Caco-2 (cell line): ENCODE measurements at regions of chr11 and their contacts with region 1.

Region 1: GRCh38 chr11:22674470-22675439 is 8.3 kb downstream of the GAS2 start:
- DNase-seq: peak; percentile 68 to 72
- H3K4me3 ChIP-seq: peak overlapping the region; percentile 11
- H3K4me3 Mint-ChIP-seq: peak overlapping the region; percentile 58
- H3K27ac Mint-ChIP-seq: peak overlapping the region; percentile 62
- H3K4me1 ChIP-seq: peaks cover 60% of the 10 kb centered on the region
- H3K4me1 Mint-ChIP-seq: peaks cover 39% of the 10 kb centered on the region
- H3K27me3 ChIP-seq: no peaks in the 10 kb centered on the region
- H3K27me3 Mint-ChIP-seq: no peaks in the 10 kb centered on the region
- CTCF ChIP-seq: no peak

Region 2: DNA sequence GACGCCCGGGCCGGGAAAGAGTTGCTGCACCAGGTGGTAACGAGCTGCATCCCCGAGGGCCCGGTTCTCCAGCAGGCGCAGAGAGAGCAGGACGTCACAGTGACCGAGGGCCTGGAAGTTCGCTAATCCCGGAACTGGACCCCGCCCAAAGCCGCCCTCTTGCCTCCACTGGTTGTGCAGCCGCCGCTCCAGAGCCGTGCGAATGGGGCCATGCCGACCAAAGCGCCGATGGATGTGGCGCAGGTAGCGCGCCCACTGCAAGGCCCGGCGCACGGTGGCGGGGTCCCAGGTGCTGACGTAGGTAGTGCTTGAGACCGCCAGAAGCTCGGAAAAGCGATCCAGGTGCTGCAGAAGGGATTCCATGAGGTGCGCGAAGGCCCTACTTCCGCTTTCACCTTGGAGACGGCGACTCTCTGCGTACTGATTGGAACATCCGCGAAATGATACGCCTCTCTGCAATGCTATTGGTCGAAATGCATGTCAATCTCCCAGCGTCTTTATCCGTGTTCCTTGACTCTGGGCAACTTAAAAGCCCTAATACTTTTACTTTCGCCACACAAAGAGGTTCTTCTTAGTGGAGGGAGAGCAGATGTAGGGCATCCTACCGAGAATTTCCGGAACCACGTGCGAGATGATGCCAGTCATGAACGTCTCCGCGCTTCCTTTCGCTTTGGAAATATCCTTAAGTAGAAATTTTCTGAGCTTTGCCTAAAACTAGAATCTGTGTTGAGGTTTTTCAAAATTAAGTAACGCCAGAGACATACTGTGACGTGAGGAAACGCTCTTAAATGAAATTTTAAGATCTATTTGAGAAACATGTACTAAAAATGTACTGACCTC is 49.1 kb before region 1 on chr11 and contains the start of gene FANCF:
- CTCF ChIA-PET with region 1: interaction called, 3 read pairs
- POLR2A ChIA-PET with region 1: no interaction called
- intact Hi-C with region 1: loop called (anchors 2 kb)
- DNase-seq: peak; percentile 95 to 98
- H3K4me3 ChIP-seq: peak within 1 kb of the TSS; percentile 88
- H3K4me3 Mint-ChIP-seq: peak within 1 kb of the TSS; percentile 97
- H3K27ac Mint-ChIP-seq: peak within 1 kb of the TSS; percentile 99
- H3K4me1 ChIP-seq: peaks cover 7% of the 10 kb centered on the region; the same call in 1 of the 2 replicates
- H3K4me1 Mint-ChIP-seq: no peaks in the 10 kb centered on the region
- H3K27me3 ChIP-seq: no peaks in the 10 kb centered on the region
- H3K27me3 Mint-ChIP-seq: no peaks in the 10 kb centered on the region
- CTCF ChIP-seq: no peak
- total RNA-seq, gene FANCF: 13.8 and 15.4 TPM in 2 replicates

Region 3: GRCh38 chr11:22688914-22689313 is 14.2 kb after region 1 on chr11:
- CTCF ChIA-PET with region 1: no interaction called
- POLR2A ChIA-PET with region 1: no interaction called
- intact Hi-C with region 1: loop called (anchors 2 kb)
- DNase-seq: peak in 1 of 2 experiments; percentile 30
- H3K4me3 ChIP-seq: no peak overlapping the region
- H3K4me3 Mint-ChIP-seq: no peak overlapping the region
- H3K27ac Mint-ChIP-seq: no peak overlapping the region
- H3K4me1 ChIP-seq: peaks cover 40% of the 10 kb centered on the region
- H3K4me1 Mint-ChIP-seq: peaks cover 27% of the 10 kb centered on the region
- H3K27me3 ChIP-seq: no peaks in the 10 kb centered on the region
- H3K27me3 Mint-ChIP-seq: no peaks in the 10 kb centered on the region
- CTCF ChIP-seq: no peak

Region 4: DNA sequence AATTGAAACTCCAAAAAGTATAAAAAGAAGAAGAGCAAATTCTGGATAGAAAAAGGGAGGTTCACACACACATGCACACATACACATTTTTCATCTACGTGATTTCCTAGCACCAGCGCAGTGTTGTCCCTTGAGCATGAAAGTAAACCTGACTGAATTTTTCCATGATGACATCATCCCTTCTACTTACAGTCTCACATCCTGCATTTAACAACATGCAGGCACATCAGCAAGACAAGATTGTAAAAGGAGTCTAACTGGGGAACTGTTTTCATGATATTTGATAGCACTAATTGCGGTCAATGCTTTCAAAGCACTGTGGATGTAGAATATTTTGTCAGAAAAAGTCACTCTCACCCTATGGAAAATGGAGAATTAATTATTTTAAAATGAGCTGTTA is 28.3 kb after region 1 on chr11:
- CTCF ChIA-PET with region 1: no interaction called
- POLR2A ChIA-PET with region 1: no interaction called
- intact Hi-C with region 1: loop called (anchors 1 kb)
- DNase-seq: peak; percentile 44 to 61
- H3K4me3 ChIP-seq: no peak overlapping the region
- H3K4me3 Mint-ChIP-seq: peak overlapping the region; percentile 52
- H3K27ac Mint-ChIP-seq: peak overlapping the region; percentile 83
- H3K4me1 ChIP-seq: peaks cover 30% of the 10 kb centered on the region
- H3K4me1 Mint-ChIP-seq: peaks cover 47% of the 10 kb centered on the region
- H3K27me3 ChIP-seq: no peaks in the 10 kb centered on the region
- H3K27me3 Mint-ChIP-seq: no peaks in the 10 kb centered on the region
- CTCF ChIP-seq: no peak